Testis (tissue), 5 donors: ENCODE measurements at regions of chr18 and their contacts with region 1.

Region 1: DNA sequence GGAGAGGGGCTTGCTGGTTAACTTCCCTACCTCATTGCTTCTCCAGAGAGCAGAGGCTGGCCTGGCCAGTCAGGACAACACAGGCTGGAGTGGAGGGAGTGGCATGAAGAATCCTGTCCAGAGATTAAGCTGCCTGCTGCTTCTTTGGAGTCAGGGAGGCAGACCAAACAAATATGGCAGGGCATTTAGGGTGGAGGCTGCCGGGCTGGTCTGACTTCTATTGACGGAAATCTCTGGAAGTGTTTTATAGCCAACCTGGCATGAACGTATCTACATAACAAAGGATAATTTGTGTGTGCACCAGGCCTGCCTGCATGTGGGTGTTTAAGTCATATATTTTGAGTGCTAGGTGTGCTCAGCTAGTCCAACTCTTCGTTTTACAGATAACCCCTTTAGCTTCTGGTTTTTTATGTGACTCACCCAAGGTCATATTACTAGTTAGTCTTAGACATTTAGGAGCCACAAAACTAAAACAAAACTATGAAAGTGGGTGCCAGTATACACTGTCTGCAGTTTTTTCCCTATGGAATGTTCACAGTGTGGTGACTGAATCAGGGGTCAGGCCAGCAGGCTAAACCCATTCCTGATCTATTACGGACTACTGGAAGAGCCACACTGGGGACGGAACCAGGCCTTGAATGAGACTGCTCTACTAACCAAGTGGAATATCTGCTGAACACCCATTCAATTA is 5.5 kb downstream of the NPC1 start:
- DNase-seq: no peak
- H3K4me3 ChIP-seq: no peak overlapping the region
- H3K27ac ChIP-seq: no peak overlapping the region
- H3K4me1 ChIP-seq: peaks cover 23% of the 10 kb centered on the region
- H3K27me3 ChIP-seq: no peaks in the 10 kb centered on the region
- CTCF ChIP-seq: no peak
- POLR2A ChIP-seq: no peak

Region 2: GRCh38 chr18:23340656-23341055 is 240.2 kb before region 1 on chr18:
- intact Hi-C with region 1: no loop called
- DNase-seq: no peak
- H3K4me3 ChIP-seq: no peak overlapping the region
- H3K27ac ChIP-seq: no peak overlapping the region
- H3K4me1 ChIP-seq: no peaks in the 10 kb centered on the region
- H3K27me3 ChIP-seq: no peaks in the 10 kb centered on the region
- CTCF ChIP-seq: no peak
- POLR2A ChIP-seq: no peak

Region 3: GRCh38 chr18:23523429-23524220 is 57.2 kb before region 1 on chr18:
- intact Hi-C with region 1: loop called (anchors 5 kb)
- DNase-seq: no peak
- H3K4me3 ChIP-seq: no peak overlapping the region
- H3K27ac ChIP-seq: no peak overlapping the region
- H3K4me1 ChIP-seq: no peaks in the 10 kb centered on the region
- H3K27me3 ChIP-seq: no peaks in the 10 kb centered on the region
- CTCF ChIP-seq: no peak
- POLR2A ChIP-seq: no peak

Region 4: GRCh38 chr18:24063121-24063731 is 482.4 kb after region 1 on chr18:
- intact Hi-C with region 1: no loop called
- DNase-seq: no peak
- H3K4me3 ChIP-seq: no peak overlapping the region
- H3K27ac ChIP-seq: peak overlapping the region; percentile 24 to 47
- H3K4me1 ChIP-seq: peaks cover 5% of the 10 kb centered on the region
- H3K27me3 ChIP-seq: no peaks in the 10 kb centered on the region
- CTCF ChIP-seq: no peak
- POLR2A ChIP-seq: no peak